ENCODE measurements at regions of chr5 and their contacts with region 1.

Region 1: GRCh38 chr5:171543148-171543815 is 123.8 kb downstream of the FGF18 start:
- DNase-seq: no peak
- H3K4me3 ChIP-seq: no peak overlapping the region
- H3K27ac ChIP-seq: no peak overlapping the region
- H3K4me1 ChIP-seq: no peaks in the 10 kb centered on the region
- H3K27me3 ChIP-seq: no peaks in the 10 kb centered on the region
- CTCF ChIP-seq: no peak

Region 2: GRCh38 chr5:171562822-171563221 is 19.5 kb after region 1 on chr5:
- CTCF ChIA-PET with region 1: no interaction called
- dilution Hi-C with region 1: no loop called
- in situ Hi-C with region 1: no loop called
- intact Hi-C with region 1: no loop called
- DNase-seq: peak; percentile 49
- H3K4me3 ChIP-seq: no peak overlapping the region
- H3K27ac ChIP-seq: no peak overlapping the region
- H3K4me1 ChIP-seq: no peaks in the 10 kb centered on the region
- H3K27me3 ChIP-seq: no peaks in the 10 kb centered on the region
- CTCF ChIP-seq: no peak

Region 3: DNA sequence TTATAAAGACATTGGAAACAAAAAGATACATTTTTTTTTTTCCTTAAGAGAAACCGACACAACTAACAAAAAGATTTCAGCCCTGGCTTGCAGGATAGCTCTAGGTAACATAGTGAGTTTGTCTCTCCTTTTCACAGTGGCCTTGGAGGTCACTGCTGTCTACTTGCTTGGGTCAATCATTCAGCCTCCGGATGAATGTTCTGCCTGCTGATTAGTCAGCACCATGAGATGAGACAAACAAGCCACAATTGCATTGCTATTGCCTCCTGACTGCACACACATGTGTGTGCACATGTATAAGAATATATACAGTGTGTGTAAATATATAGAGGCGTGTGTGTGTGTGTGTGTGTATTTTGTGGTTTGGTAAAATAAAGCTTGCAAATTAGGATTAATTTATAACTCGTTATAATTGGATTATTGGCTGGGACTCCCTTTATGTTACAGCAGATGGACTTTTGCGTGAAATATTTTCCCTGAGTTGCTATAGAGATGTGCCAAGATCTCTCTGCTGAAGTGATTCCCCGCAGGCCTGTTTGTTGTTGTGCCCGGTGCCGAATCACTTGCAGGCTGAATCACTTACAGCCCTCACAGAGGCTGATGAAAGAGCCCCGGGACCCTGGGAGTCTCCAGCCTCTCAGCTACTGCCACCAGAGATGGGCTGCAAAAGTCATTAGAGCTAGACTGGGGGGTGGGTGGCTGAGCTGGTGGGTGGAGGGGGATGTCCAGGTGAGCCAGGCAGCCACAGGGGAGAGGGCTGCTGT is 37.4 kb after region 1 on chr5:
- CTCF ChIA-PET with region 1: no interaction called
- dilution Hi-C with region 1: loop called (anchors 5 kb)
- in situ Hi-C with region 1: no loop called
- intact Hi-C with region 1: no loop called
- DNase-seq: peak; percentile 18
- H3K4me3 ChIP-seq: no peak overlapping the region
- H3K27ac ChIP-seq: no peak overlapping the region
- H3K4me1 ChIP-seq: no peaks in the 10 kb centered on the region
- H3K27me3 ChIP-seq: no peaks in the 10 kb centered on the region
- CTCF ChIP-seq: no peak

Measured in mammary epithelial cell (primary cell).